ENCODE measurements at regions of chr1 and their contacts with region 1.

Region 1: GRCh38 chr1:171801487-171801891 is 20.0 kb downstream of the METTL13 start:
- DNase-seq: peak in 1 of 2 donors; percentile 78
- H3K4me3 ChIP-seq: no peak overlapping the region
- H3K27ac ChIP-seq: no peak overlapping the region
- H3K4me1 ChIP-seq: peaks cover 0 to 14% (median 4%) of the 10 kb centered on the region in 4 donors
- H3K27me3 ChIP-seq: no peaks in the 10 kb centered on the region
- CTCF ChIP-seq: peak in 5 of 7 experiments; percentile 31 to 72 (median 65)
- EP300 ChIP-seq: no peak
- POLR2A ChIP-seq: no peak

Region 2: DNA sequence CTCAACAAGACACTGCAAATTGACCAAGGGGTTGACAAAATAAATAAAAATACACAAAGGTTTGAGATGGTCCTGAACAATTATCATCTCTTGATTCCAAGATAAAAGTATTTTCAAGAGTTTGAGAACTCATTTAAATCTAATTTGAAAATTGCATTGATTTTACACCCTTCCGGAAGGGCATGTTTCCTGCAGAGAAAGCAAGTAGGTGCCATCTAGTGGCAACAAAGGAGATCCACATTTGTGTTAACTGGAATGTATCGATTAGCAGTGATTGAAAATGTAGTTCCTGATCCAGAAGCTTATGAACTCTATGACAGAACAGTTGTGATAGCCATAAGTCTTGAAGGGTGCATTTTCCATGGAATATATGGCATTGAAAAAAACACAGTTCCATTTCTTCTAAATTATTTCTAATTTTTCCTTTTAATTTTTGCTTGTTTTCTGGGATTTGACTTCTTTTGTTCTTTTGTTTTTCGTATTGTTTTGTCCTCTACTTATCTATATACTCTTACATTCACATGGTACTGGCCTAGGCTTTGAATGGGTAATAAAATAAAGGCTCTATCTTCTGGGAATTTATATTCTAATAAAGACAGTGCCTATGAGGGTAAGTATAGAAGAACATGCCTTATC is 183.5 kb after region 1 on chr1:
- intact Hi-C with region 1: loop called (anchors 5 kb)
- DNase-seq: peak in 1 of 2 donors; percentile 52
- H3K4me3 ChIP-seq: no peak overlapping the region
- H3K27ac ChIP-seq: no peak overlapping the region
- H3K4me1 ChIP-seq: peaks cover 0 to 11% (median 0%) of the 10 kb centered on the region in 4 donors
- H3K27me3 ChIP-seq: no peaks in the 10 kb centered on the region
- CTCF ChIP-seq: peak in 5 of 7 experiments; percentile 46 to 67 (median 61)
- EP300 ChIP-seq: no peak
- POLR2A ChIP-seq: no peak